B cell (primary cell): ENCODE measurements at regions of chr22 and their contacts with region 1.

Region 1: GRCh38 chr22:31080848-31081649 is at the start of gene SMTN:
- DNase-seq: peak; percentile 93
- ATAC-seq: peak; percentile 77
- H3K4me3 ChIP-seq: peak within 1 kb of the TSS; percentile 8 to 75 (median 67)
- H3K4me3 Mint-ChIP-seq: peak within 1 kb of the TSS; percentile 92
- H3K27ac ChIP-seq: no peak within 1 kb of the TSS
- H3K27ac Mint-ChIP-seq: peak within 1 kb of the TSS; percentile 58
- H3K4me1 ChIP-seq: peaks cover 22 to 50% of the 10 kb centered on the region in 2 donors
- H3K4me1 Mint-ChIP-seq: peaks cover 34% of the 10 kb centered on the region
- H3K27me3 ChIP-seq: no peaks in the 10 kb centered on the region
- H3K27me3 Mint-ChIP-seq: no peaks in the 10 kb centered on the region
- CTCF ChIP-seq: no peak
- total RNA-seq, gene SMTN: 4.0 and 4.7 TPM in 2 replicates

Region 2: DNA sequence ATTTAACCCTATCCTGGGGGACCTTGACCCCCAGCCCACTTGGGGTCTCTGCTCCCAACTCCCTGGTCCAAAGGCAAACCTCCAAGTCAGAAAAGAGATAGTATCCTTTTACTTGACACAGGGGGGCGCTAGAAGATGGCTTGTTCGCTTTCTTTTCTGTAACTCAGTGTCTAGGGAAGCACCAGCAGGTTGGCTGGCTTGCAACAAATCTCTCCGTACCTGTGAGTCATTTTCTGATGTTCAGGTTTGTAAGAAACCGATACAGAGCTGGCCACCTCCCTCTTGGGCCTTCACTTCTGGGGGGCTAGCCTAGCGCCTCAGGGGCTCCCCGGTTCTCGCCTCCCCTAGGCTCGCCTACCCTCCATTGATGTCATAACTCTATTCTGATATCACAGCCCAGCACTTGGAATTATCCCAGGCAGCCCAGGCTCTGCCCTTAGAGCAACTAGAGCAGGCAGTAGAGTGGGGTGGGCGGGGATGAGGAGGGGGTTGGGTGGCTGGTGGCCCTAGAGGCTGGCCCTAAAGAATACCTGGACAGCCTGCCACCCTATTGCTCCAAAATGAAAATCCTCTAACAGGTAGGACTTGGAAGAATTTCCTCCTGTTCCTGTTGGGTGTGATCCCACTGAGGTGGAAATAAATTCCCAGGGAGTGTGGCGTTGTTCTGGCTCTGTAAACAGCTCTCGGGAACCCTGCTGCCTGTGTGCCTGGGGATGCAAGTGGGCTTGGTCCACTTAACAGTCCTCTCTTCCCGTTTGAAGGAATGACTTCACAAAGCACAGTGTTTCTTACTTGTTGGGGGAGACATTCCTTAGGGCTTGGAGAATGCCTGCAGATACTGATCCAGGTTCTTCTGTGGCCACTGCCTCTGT is 317.0 kb before region 1 on chr22:
- CTCF ChIA-PET with region 1: no interaction called
- POLR2A ChIA-PET with region 1: no interaction called
- intact Hi-C with region 1: loop called (anchors 5 kb)
- DNase-seq: peak; percentile 56
- ATAC-seq: no peak
- H3K4me3 ChIP-seq: no peak overlapping the region
- H3K4me3 Mint-ChIP-seq: no peak overlapping the region
- H3K27ac ChIP-seq: no peak overlapping the region
- H3K27ac Mint-ChIP-seq: no peak overlapping the region
- H3K4me1 ChIP-seq: no peaks in the 10 kb centered on the region
- H3K4me1 Mint-ChIP-seq: no peaks in the 10 kb centered on the region
- H3K27me3 ChIP-seq: no peaks in the 10 kb centered on the region
- H3K27me3 Mint-ChIP-seq: peaks cover 3% of the 10 kb centered on the region
- CTCF ChIP-seq: peak; percentile 56

Region 3: GRCh38 chr22:30910358-30910757 is 170.7 kb before region 1 on chr22:
- CTCF ChIA-PET with region 1: no interaction called
- POLR2A ChIA-PET with region 1: no interaction called
- intact Hi-C with region 1: no loop called
- DNase-seq: no peak
- ATAC-seq: no peak
- H3K4me3 ChIP-seq: no peak overlapping the region
- H3K4me3 Mint-ChIP-seq: no peak overlapping the region
- H3K27ac ChIP-seq: no peak overlapping the region
- H3K27ac Mint-ChIP-seq: no peak overlapping the region
- H3K4me1 ChIP-seq: no peaks in the 10 kb centered on the region
- H3K4me1 Mint-ChIP-seq: no peaks in the 10 kb centered on the region
- H3K27me3 ChIP-seq: no peaks in the 10 kb centered on the region
- H3K27me3 Mint-ChIP-seq: no peaks in the 10 kb centered on the region
- CTCF ChIP-seq: no peak

Region 4: GRCh38 chr22:30920407-30920806 is 160.6 kb before region 1 on chr22:
- CTCF ChIA-PET with region 1: interaction called, 8 read pairs
- POLR2A ChIA-PET with region 1: no interaction called
- intact Hi-C with region 1: loop called (anchors 1 kb)
- DNase-seq: peak; percentile 83
- ATAC-seq: peak; percentile 71
- H3K4me3 ChIP-seq: peak overlapping the region in 2 of 5 experiments; percentile 21 to 72
- H3K4me3 Mint-ChIP-seq: peak overlapping the region; percentile 33
- H3K27ac ChIP-seq: no peak overlapping the region
- H3K27ac Mint-ChIP-seq: no peak overlapping the region
- H3K4me1 ChIP-seq: peaks cover 9 to 14% of the 10 kb centered on the region in 2 donors
- H3K4me1 Mint-ChIP-seq: peaks cover 12% of the 10 kb centered on the region
- H3K27me3 ChIP-seq: peaks cover 0 to 6% (median under 1%) of the 10 kb centered on the region in 4 experiments
- H3K27me3 Mint-ChIP-seq: peaks cover 3% of the 10 kb centered on the region
- CTCF ChIP-seq: peak; percentile 99

Region 5: GRCh38 chr22:30947816-30948454 is 133.1 kb before region 1 on chr22:
- CTCF ChIA-PET with region 1: interaction called, 11 read pairs
- POLR2A ChIA-PET with region 1: interaction called, 3 read pairs
- intact Hi-C with region 1: loop called (anchors 1 kb)
- DNase-seq: peak; percentile 39
- ATAC-seq: no peak
- H3K4me3 ChIP-seq: no peak overlapping the region
- H3K4me3 Mint-ChIP-seq: no peak overlapping the region
- H3K27ac ChIP-seq: no peak overlapping the region
- H3K27ac Mint-ChIP-seq: no peak overlapping the region
- H3K4me1 ChIP-seq: no peaks in the 10 kb centered on the region
- H3K4me1 Mint-ChIP-seq: no peaks in the 10 kb centered on the region
- H3K27me3 ChIP-seq: no peaks in the 10 kb centered on the region
- H3K27me3 Mint-ChIP-seq: no peaks in the 10 kb centered on the region
- CTCF ChIP-seq: peak; percentile 24

Region 6: GRCh38 chr22:31107178-31107893 is 26.3 kb after region 1 on chr22 and contains the start of gene SELENOM:
- CTCF ChIA-PET with region 1: interaction called, 14 read pairs
- POLR2A ChIA-PET with region 1: interaction called, 6 read pairs
- intact Hi-C with region 1: loop called (anchors 1 kb)
- DNase-seq: peak; percentile 90
- ATAC-seq: peak; percentile 97
- H3K4me3 ChIP-seq: peak within 1 kb of the TSS; percentile 42 to 91 (median 72)
- H3K4me3 Mint-ChIP-seq: peak within 1 kb of the TSS; percentile 96
- H3K27ac ChIP-seq: peak within 1 kb of the TSS; percentile 37 to 57
- H3K27ac Mint-ChIP-seq: peak within 1 kb of the TSS; percentile 86
- H3K4me1 ChIP-seq: peaks cover 16 to 17% of the 10 kb centered on the region in 2 donors
- H3K4me1 Mint-ChIP-seq: peaks cover 22% of the 10 kb centered on the region
- H3K27me3 ChIP-seq: no peaks in the 10 kb centered on the region
- H3K27me3 Mint-ChIP-seq: no peaks in the 10 kb centered on the region
- CTCF ChIP-seq: peak; percentile 77
- total RNA-seq, gene SELENOM: 18.4 and 23.6 TPM in 2 replicates

Region 7: DNA sequence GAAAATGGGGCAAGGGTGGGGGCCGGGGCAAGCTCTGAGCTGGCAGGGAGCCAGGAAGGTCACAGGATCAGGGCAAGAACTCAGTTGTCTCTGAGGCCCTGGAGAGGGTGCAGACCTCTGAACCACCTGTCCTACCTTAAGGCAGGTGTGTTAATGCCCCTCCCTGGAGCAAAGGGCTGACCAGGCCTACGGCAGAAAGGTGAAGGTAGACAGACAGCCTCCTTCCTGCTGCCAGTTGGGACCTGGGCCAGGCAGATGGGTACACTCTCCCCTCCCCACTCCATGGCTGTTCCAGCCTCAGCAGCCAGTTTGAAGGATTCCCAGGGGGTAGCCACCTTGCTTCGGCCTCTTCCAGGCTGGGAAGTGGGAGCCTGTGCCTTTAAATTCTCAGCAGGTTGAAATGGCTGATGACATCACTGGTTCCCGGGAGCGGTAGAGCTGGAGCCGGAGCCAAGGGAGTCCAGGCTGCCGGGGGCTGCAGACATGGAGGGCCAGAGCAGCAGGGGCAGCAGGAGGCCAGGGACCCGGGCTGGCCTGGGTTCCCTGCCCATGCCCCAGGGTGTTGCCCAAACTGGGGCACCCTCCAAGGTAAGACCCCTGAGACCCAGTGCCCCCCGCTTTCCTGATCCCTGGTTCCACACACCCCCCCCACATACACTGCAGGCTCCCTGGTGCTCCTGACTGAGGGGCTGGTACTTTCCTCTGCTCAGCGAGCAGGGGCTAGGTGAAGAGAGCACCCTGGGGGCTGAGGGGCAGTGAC is 41.7 kb after region 1 on chr22 and contains the start of gene INPP5J:
- CTCF ChIA-PET with region 1: no interaction called
- POLR2A ChIA-PET with region 1: no interaction called
- intact Hi-C with region 1: no loop called
- DNase-seq: no peak
- ATAC-seq: no peak
- H3K4me3 ChIP-seq: no peak within 1 kb of the TSS
- H3K4me3 Mint-ChIP-seq: no peak within 1 kb of the TSS
- H3K27ac ChIP-seq: no peak within 1 kb of the TSS
- H3K27ac Mint-ChIP-seq: no peak within 1 kb of the TSS
- H3K4me1 ChIP-seq: peaks cover 5 to 12% of the 10 kb centered on the region in 2 donors
- H3K4me1 Mint-ChIP-seq: peaks cover 6% of the 10 kb centered on the region
- H3K27me3 ChIP-seq: peaks cover 0 to 12% (median 0%) of the 10 kb centered on the region in 4 experiments
- H3K27me3 Mint-ChIP-seq: no peaks in the 10 kb centered on the region
- CTCF ChIP-seq: no peak
- total RNA-seq, gene INPP5J: 0.29 and 0.52 TPM in 2 replicates

Region 8: GRCh38 chr22:31160328-31160978 is 79.4 kb after region 1 on chr22:
- CTCF ChIA-PET with region 1: interaction called, 6 read pairs
- POLR2A ChIA-PET with region 1: interaction called, 5 read pairs
- intact Hi-C with region 1: loop called (anchors 1 kb)
- DNase-seq: no peak
- ATAC-seq: peak; percentile 29
- H3K4me3 ChIP-seq: peak overlapping the region; percentile 65 to 81 (median 74)
- H3K4me3 Mint-ChIP-seq: peak overlapping the region; percentile 95
- H3K27ac ChIP-seq: peak overlapping the region; percentile 82 to 83
- H3K27ac Mint-ChIP-seq: peak overlapping the region; percentile 95
- H3K4me1 ChIP-seq: peaks cover 19 to 24% of the 10 kb centered on the region in 2 donors
- H3K4me1 Mint-ChIP-seq: peaks cover 33% of the 10 kb centered on the region
- H3K27me3 ChIP-seq: peaks cover 0 to 2% (median 0%) of the 10 kb centered on the region in 4 experiments
- H3K27me3 Mint-ChIP-seq: no peaks in the 10 kb centered on the region
- CTCF ChIP-seq: no peak